HEK293 (cell line): ENCODE measurements at regions of chr14 and their contacts with region 1.

Region 1: GRCh38 chr14:67674481-67675169 is at the start of gene VTI1B:
- H3K4me3 ChIP-seq: peak within 1 kb of the TSS; percentile 98
- H3K27ac ChIP-seq: peak within 1 kb of the TSS; percentile 97
- H3K4me1 ChIP-seq: peaks cover 12% of the 10 kb centered on the region
- CTCF ChIP-seq: peak; percentile 67

Region 2: DNA sequence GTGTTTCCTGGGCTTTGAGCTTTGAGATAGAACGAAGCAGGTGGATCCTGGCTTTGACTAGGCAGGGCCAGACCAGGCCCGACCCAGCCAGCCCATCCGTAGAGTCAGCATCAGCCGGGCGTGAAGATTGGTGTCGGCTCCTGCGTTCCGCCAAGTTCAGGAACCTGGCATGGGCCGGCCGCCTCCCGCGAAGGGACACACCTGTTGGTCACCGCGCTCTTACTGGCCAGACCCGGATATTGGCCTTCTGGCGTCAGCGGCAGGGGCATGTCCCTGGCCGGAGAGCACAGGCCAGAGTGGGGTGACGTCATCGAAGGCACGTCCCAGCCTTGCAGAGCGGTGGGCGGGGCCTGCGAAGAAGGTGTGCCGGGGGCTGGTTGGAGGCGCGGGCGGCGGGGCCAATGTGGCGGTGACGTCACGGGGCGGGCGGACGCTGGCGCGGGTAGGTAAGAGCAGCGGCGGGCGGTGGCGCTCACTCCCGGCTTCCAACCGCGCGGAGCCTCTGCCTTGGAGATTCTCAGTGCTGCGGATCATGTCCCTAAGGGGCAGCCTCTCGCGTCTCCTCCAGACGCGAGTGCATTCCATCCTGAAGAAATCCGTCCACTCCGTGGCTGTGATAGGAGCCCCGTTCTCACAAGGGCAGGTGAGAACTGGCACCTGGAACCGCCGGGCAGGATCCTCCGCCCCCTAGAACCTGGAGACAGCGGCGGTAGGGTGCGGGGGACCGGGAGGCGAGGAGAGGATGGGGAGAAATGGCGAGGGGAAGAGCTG is 55.0 kb before region 1 on chr14 and contains the start of gene ARG2:
- CTCF ChIA-PET with region 1: interaction called, 11 read pairs
- POLR2A ChIA-PET with region 1: interaction called, 3 read pairs
- H3K4me3 ChIP-seq: peak within 1 kb of the TSS; percentile 80
- H3K27ac ChIP-seq: peak within 1 kb of the TSS; percentile 38; the same call in 1 of the 2 replicates
- H3K4me1 ChIP-seq: peaks cover 13% of the 10 kb centered on the region
- CTCF ChIP-seq: peak; percentile 56; the same call in 1 of the 2 replicates

Region 3: GRCh38 chr14:67695394-67695949 is 20.8 kb after region 1 on chr14 and contains the start of gene RDH11:
- CTCF ChIA-PET with region 1: interaction called, 3 read pairs
- POLR2A ChIA-PET with region 1: interaction called, 15 read pairs
- H3K4me3 ChIP-seq: peak within 1 kb of the TSS; percentile 89
- H3K27ac ChIP-seq: peak within 1 kb of the TSS; percentile 64
- H3K4me1 ChIP-seq: peaks cover 5% of the 10 kb centered on the region; the same call in 1 of the 2 replicates
- CTCF ChIP-seq: no peak

Region 4: DNA sequence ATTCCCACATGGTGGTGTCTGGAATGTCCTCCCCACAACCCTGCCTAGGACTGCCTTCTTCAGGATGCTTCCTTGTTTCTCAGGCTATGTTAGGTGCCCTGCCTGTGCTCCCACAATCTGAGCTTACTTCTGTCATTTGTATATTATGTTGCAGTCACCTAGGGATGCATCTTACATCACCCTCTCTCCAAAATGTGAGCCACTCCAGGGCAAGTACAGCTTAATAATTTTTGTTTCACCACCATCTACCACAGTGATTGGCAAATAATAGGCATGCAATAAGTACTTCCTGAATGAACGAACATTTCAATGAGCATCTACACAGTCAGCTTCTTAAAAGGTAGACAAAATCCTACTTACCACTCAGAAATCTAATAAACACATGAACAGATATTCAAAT is 104.2 kb after region 1 on chr14:
- CTCF ChIA-PET with region 1: no interaction called
- POLR2A ChIA-PET with region 1: no interaction called
- H3K4me3 ChIP-seq: no peak overlapping the region
- H3K27ac ChIP-seq: no peak overlapping the region
- H3K4me1 ChIP-seq: no peaks in the 10 kb centered on the region
- CTCF ChIP-seq: no peak

Region 5: DNA sequence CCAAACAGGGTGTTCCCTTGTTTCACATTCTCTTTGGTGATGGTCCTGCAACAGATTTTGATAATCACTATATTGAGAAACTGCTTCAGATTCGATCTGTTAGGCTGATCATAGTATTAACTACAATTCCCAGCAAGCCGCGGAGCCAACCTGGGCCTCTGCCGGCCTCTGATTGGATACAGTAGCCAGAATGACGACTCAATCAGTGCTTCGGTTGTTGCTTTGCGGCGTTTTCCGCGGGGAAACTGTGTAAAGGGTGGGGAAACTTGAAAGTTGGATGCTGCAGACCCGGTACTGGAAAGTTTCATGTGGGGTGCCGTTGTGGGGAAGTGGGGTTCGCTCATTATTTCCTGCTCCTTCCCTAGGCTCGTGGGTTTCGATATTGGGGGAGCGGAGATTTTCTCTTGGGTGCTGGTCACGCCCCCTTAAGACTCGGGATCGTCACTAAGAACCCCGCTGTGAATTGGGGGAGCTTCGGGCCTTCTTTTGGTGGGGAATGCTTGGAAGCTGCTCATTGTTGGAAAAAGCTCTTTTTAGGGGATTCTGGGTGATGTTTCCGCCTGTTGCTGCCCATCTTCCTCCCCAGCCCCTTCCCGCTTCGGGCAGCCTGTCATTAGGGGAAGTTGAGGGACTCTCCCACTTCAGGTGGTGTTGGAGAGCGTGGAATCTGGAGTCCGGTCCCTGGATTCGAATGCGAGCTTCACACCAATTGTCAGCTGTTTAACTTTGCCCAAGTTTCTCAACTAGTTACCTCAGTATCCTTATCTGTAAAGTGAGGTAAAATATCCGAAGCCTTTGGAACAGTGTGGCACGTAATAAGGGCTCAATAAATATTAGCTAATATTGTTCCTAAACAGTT is 145.2 kb after region 1 on chr14 and contains the start of gene RAD51B:
- CTCF ChIA-PET with region 1: no interaction called
- POLR2A ChIA-PET with region 1: no interaction called
- H3K4me3 ChIP-seq: peak within 1 kb of the TSS; percentile 85
- H3K27ac ChIP-seq: peak within 1 kb of the TSS; percentile 45; the same call in 1 of the 2 replicates
- H3K4me1 ChIP-seq: no peaks in the 10 kb centered on the region
- CTCF ChIP-seq: no peak